HepG2 (cell line): ENCODE measurements at regions of chr21 and their contacts with region 1.

Region 1: DNA sequence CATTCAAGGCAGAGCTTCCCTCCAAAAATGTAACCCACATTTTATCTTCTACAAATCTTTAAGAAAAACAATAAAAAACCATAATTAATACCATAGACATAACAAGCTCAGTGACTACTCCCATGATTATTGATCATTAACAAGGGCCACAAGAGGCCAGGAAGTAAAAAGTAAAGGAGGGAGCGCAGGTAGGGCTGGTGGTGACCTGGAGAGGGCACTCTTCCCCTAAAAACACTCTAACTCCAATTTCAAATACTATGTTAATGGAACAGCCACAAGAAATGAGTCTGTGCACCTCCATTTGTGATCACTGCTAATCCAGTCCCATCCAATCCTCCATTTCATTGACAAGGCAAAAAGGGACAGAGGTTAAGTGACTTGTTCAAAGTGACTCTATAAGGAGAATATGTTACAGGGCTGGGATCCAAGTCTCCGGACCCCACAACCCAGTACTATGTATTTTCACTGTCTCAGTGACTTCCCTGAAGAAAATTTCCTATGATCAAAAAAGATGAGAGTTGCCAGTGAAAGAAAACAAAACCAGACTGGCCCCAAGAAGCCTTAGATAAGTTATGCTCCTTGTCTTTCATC is 41.2 kb upstream of the CFAP298 start:
- DNase-seq: peak; percentile 37
- ATAC-seq: peak; percentile 95
- H3K4me3 ChIP-seq: no peak overlapping the region
- H3K27ac ChIP-seq: no peak overlapping the region
- H3K4me1 ChIP-seq: peaks cover 9% of the 10 kb centered on the region
- H3K27me3 ChIP-seq: no peaks in the 10 kb centered on the region
- CTCF ChIP-seq: peak; percentile 83
- EP300 ChIP-seq: no peak
- POLR2A ChIP-seq: no peak
- RAD21 ChIP-seq: peak; percentile 59; the same call in 1 of the 2 replicates

Region 2: GRCh38 chr21:32641710-32642698 is 11.4 kb before region 1 on chr21:
- CTCF ChIA-PET with region 1: no interaction called
- POLR2A ChIA-PET with region 1: no interaction called
- in situ Hi-C with region 1: no loop called
- intact Hi-C with region 1: no loop called
- DNase-seq: no peak
- ATAC-seq: no peak; the same call in 2 of the 3 replicates
- H3K4me3 ChIP-seq: no peak overlapping the region
- H3K27ac ChIP-seq: no peak overlapping the region
- H3K4me1 ChIP-seq: peaks cover 11% of the 10 kb centered on the region
- H3K27me3 ChIP-seq: no peaks in the 10 kb centered on the region
- CTCF ChIP-seq: no peak; the same call in 1 of the 2 replicates
- EP300 ChIP-seq: no peak
- POLR2A ChIP-seq: no peak
- RAD21 ChIP-seq: no peak

Region 3: DNA sequence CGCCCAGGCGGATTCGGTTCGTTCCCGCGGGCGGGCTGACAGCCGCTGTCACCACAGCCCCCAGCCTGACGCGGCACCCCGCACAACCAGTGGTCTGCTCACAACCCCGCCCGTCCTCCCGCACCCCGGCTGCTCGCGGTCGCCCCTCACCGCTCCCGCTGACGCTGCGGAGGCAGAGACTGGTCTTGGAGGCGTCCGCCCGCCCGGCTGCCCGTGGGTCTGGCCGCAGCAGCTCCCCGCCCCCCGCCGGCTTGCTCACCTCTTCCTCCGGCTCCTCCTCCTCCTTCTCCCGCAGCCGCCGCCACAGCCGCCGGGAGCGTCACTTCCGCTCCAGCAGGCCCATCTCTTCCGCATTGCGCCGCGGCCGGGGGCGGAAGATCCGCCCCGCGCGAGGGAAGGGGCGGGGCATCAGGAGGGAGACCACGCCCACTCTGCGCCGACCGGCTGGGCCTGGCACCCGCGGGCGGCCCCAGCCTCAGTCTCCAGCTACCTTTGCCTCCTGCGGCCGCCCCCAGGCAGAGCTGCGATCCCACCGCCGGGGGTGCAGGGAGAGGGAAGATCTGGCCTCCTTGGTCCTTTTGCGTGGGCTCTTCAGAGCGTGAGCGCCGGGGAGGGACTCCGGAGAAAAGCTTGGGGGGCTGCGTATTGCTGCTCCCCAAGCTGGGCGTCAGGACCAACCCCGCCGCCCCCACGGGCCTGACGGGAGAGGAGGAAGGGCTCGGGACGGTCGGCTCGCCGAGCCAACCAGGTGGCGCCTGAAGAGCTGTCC is 74.5 kb after region 1 on chr21 and contains the start of gene SYNJ1:
- CTCF ChIA-PET with region 1: no interaction called
- POLR2A ChIA-PET with region 1: interaction called, 4 read pairs
- in situ Hi-C with region 1: no loop called
- intact Hi-C with region 1: loop called (anchors 5 kb)
- DNase-seq: peak; percentile 87
- ATAC-seq: peak; percentile 92
- H3K4me3 ChIP-seq: peak within 1 kb of the TSS; percentile 76 to 94 (median 91)
- H3K27ac ChIP-seq: peak within 1 kb of the TSS; percentile 84
- H3K4me1 ChIP-seq: peaks cover 15% of the 10 kb centered on the region; the same call in 1 of the 2 replicates
- H3K27me3 ChIP-seq: no peaks in the 10 kb centered on the region; a peak in 1 of 5 replicates
- CTCF ChIP-seq: peak; percentile 27; the same call in 1 of the 2 replicates
- EP300 ChIP-seq: no peak
- POLR2A ChIP-seq: peak; percentile 48 to 82; a peak in 2 of 4 replicates
- RAD21 ChIP-seq: peak; percentile 45
- total RNA-seq, gene SYNJ1: 2.7 and 6.4 TPM in 2 replicates

Region 4: DNA sequence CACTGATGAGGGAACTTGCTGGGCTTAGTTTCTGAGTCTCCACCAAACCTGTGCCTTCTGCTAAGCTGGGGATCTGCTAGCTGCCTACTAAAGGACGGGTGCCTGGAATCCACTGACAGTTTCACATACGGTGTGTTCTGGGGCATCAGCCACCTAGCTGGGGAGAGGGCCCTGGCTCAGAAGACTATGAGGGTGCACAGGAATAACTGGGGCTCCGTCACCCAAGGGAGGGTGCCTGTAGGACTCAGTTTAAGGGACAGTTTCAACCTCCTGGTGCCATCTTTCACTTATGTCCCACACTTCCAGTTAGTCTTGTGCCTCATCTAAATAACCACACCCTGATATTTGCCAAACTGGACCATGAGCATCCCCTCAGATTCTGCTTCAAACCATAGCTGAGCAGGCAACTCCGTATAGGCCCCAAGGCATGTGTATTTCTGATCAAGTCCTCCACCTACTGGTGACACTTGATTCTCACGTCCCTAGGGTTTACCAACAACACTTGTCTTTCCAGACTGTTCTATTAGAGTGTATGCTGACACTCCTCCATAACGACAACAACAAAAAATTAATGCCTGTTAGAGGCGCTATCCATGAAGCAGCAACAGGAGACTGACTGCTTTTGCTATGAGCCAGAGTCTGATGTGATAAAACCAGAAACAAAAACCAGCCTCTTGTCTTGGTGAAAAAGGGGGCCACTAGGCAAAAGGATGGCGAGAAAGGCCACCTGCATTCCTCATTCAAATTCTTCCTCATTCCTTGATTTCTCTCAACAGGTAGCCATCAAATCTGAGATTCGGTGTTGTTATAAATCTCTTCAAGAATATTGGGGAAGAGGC is 173.1 kb after region 1 on chr21:
- CTCF ChIA-PET with region 1: interaction called, 29 read pairs
- POLR2A ChIA-PET with region 1: no interaction called
- in situ Hi-C with region 1: loop called (anchors 5 kb)
- intact Hi-C with region 1: loop called (anchors 1 kb)
- DNase-seq: peak; percentile 54
- ATAC-seq: peak; percentile 99
- H3K4me3 ChIP-seq: no peak overlapping the region
- H3K27ac ChIP-seq: no peak overlapping the region
- H3K4me1 ChIP-seq: no peaks in the 10 kb centered on the region
- H3K27me3 ChIP-seq: no peaks in the 10 kb centered on the region
- CTCF ChIP-seq: peak; percentile 85
- EP300 ChIP-seq: no peak
- POLR2A ChIP-seq: no peak
- RAD21 ChIP-seq: peak; percentile 34; the same call in 1 of the 2 replicates

Region 5: GRCh38 chr21:32916522-32917099 is 263.2 kb after region 1 on chr21:
- CTCF ChIA-PET with region 1: interaction called, 6 read pairs
- POLR2A ChIA-PET with region 1: no interaction called
- in situ Hi-C with region 1: no loop called
- intact Hi-C with region 1: loop called (anchors 1 kb)
- DNase-seq: peak; percentile 35
- ATAC-seq: peak; percentile 87
- H3K4me3 ChIP-seq: no peak overlapping the region
- H3K27ac ChIP-seq: no peak overlapping the region
- H3K4me1 ChIP-seq: peaks cover 7% of the 10 kb centered on the region; the same call in 1 of the 2 replicates
- H3K27me3 ChIP-seq: peaks cover 0 to 9% of the 10 kb centered on the region in 2 experiments; a peak in 3 of 5 replicates
- CTCF ChIP-seq: peak; percentile 48
- EP300 ChIP-seq: no peak
- POLR2A ChIP-seq: no peak
- RAD21 ChIP-seq: no peak

Region 6: GRCh38 chr21:32929633-32930038 is 276.2 kb after region 1 on chr21:
- CTCF ChIA-PET with region 1: no interaction called
- POLR2A ChIA-PET with region 1: no interaction called
- in situ Hi-C with region 1: no loop called
- intact Hi-C with region 1: no loop called
- DNase-seq: no peak
- ATAC-seq: no peak
- H3K4me3 ChIP-seq: no peak overlapping the region
- H3K27ac ChIP-seq: no peak overlapping the region
- H3K4me1 ChIP-seq: no peaks in the 10 kb centered on the region
- H3K27me3 ChIP-seq: peaks cover 0 to 10% of the 10 kb centered on the region in 2 experiments; a peak in 2 of 5 replicates
- CTCF ChIP-seq: no peak
- EP300 ChIP-seq: no peak
- POLR2A ChIP-seq: no peak
- RAD21 ChIP-seq: no peak